Uterus (tissue), 4 donors: ENCODE measurements at regions of chr1 and their contacts with region 1.

Region 1: GRCh38 chr1:39901698-39902459 is at the start of gene MYCL:
- DNase-seq: peak; percentile 28 to 45
- H3K4me3 ChIP-seq: peak within 1 kb of the TSS; percentile 34 to 45
- H3K27ac ChIP-seq: no peak within 1 kb of the TSS
- H3K4me1 ChIP-seq: peaks cover 0 to 8% of the 10 kb centered on the region in 2 donors
- H3K27me3 ChIP-seq: peaks cover 4 to 9% of the 10 kb centered on the region in 2 donors
- CTCF ChIP-seq: peak; percentile 62 to 71 (median 68)
- POLR2A ChIP-seq: peak in 1 of 2 donors; percentile 43
- total RNA-seq, gene MYCL: 0.40 to 3.6 TPM in 2 of 4 donors, not detected in the others

Region 2: DNA sequence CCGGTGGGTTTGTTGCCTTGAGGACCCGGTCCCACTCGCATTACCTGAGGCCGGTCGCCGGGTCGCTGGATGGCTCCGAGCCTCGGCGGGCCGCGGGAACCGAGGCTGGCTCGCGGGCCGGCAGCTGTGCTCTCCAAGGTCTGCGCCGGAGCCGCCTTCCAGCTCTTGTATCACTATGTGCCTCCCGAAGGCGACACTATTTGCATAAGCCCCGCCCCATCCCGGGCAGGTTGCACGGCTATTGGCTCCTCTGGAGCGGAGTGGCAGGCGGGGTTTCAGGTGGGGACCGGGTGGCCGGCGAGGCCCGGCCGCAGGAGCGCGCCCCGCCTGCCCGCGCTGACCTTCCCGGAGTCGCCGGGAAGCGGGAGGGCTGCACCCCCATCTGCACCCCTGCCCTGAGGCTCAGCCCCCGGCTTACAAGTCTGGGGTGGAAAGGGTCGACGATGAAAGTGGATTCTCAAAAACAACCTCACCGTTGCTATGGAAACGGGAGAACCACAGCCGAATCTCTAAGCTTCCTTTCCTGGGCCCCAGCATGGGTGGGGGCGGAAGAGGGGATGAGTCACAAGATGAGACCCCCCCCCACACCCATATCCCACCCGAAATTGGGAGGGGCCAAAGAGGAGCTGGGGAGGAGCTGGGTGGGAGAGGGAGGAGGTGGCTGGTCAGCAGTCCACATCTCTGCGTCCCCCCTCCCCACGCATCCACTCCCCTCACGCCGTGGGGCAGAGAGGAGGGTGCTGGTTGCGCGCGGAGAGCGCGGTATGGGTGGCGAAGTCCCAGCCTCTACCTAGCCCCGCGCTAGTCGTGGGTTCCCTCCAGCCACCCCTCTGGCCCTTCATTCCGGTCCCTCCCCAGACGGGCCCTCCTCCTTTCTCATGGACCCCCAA is 210.4 kb before region 1 on chr1 and contains the start of gene HPCAL4:
- intact Hi-C with region 1: no loop called
- DNase-seq: peak; percentile 75 to 78
- H3K4me3 ChIP-seq: peak within 1 kb of the TSS; percentile 12 to 44
- H3K27ac ChIP-seq: no peak within 1 kb of the TSS
- H3K4me1 ChIP-seq: peaks cover 0 to 13% of the 10 kb centered on the region in 2 donors
- H3K27me3 ChIP-seq: peaks cover 13% of the 10 kb centered on the region in 2 donors
- CTCF ChIP-seq: no peak
- POLR2A ChIP-seq: no peak
- total RNA-seq, gene HPCAL4: 0.24 to 3.9 TPM in 2 of 4 donors, not detected in the others

Region 3: DNA sequence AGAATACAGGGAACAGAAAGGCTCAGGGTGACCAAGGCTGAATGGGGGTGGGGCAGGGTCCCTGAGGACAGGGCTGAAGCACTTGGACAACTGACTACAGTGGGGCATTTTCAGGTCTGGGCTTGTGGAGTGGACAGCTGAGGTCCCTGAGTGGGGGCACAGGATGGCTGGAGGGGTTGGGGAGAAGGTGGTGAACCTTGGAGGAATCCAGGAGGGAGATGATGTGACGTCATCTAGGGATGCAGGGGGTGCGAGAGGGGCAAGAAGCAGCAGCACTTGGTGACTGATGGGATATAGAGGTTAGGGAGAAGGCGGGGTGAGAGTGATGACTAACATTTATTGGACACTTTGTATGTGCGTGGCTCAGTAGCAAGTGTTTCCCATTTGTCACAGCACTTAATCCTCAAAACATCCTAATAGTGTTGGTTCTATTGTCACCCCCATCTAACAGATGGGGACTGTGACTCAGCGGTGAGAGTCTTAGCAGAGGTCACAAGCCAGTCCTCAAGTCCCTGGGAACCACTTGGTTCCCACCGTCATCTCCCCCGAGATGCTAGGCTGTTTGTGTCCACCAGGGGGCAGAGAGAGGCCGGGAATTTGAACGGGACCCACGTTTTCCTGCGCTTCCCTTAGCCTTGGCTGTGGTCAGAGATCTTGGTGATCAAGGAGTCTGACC is 85.3 kb before region 1 on chr1:
- intact Hi-C with region 1: loop called (anchors 5 kb)
- DNase-seq: peak; percentile 46 to 69
- H3K4me3 ChIP-seq: no peak overlapping the region
- H3K27ac ChIP-seq: no peak overlapping the region
- H3K4me1 ChIP-seq: no peaks in the 10 kb centered on the region
- H3K27me3 ChIP-seq: no peaks in the 10 kb centered on the region
- CTCF ChIP-seq: peak; percentile 71 to 95 (median 80)
- POLR2A ChIP-seq: no peak